ENCODE measurements at regions of chr10 and their contacts with region 1.

Region 1: GRCh38 chr10:131981429-131982184 is at the start of gene BNIP3:
- DNase-seq: peak; percentile 94
- H3K4me3 Mint-ChIP-seq: peak within 1 kb of the TSS; percentile 83
- H3K27ac Mint-ChIP-seq: peak within 1 kb of the TSS; percentile 65
- H3K4me1 Mint-ChIP-seq: peaks cover 35% of the 10 kb centered on the region
- H3K27me3 Mint-ChIP-seq: no peaks in the 10 kb centered on the region
- total RNA-seq, gene BNIP3: 55.5 to 55.9 TPM

Region 2: DNA sequence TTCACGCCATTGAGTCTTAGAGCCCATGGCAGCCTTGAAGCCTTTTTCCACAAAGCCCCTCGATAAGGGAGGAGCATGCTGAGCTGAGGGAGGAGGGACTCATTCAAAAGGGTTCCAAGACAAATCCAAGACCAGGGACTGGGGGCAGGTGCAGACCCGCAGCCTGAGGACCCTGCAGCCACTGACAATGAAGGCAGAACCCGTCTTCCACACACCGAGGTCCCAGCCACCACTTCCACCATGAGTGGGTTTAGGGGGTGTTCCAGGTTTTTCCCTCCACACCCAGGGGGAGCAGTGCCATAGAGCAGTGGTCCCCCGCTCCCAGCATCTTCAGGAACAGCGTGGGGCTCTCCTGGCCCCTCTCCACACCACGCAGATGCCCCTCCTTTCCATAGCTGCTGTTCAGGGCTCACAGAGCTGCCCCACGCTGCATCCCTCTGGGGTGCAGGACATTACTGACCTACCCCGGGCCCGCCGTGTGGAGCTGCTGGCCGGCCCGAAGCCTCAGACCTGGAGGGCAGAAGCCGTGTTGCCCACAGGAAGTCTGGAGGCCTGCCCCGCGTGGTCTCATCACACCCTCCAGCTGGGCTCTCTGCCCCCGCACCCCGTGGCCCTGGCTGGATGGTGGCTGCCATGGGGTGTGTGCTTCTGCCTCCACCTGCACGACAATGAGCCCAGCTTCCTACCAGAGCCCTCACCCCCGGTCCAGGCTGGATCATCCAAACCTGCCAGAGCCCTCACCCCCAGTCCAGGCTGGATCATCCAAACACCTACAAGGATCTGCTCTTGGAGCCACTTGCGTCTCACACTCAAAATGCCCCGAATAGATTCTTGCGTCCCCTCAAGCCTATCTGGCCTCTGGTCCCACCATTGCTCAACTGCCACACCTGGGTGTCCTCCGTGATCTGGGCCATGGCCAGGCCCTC is 450.1 kb before region 1 on chr10:
- CTCF ChIA-PET with region 1: no interaction called
- intact Hi-C with region 1: no loop called
- DNase-seq: no peak
- H3K4me3 Mint-ChIP-seq: no peak overlapping the region
- H3K27ac Mint-ChIP-seq: no peak overlapping the region
- H3K4me1 Mint-ChIP-seq: no peaks in the 10 kb centered on the region
- H3K27me3 Mint-ChIP-seq: peaks cover 2% of the 10 kb centered on the region

Region 3: GRCh38 chr10:131900350-131901146 is 81.1 kb before region 1 on chr10 and contains the start of gene PPP2R2D:
- CTCF ChIA-PET with region 1: interaction called, 4 read pairs
- intact Hi-C with region 1: loop called (anchors 1 kb)
- DNase-seq: peak; percentile 94
- H3K4me3 Mint-ChIP-seq: peak within 1 kb of the TSS; percentile 87
- H3K27ac Mint-ChIP-seq: peak within 1 kb of the TSS; percentile 92
- H3K4me1 Mint-ChIP-seq: peaks cover 47% of the 10 kb centered on the region
- H3K27me3 Mint-ChIP-seq: peaks cover 4% of the 10 kb centered on the region
- total RNA-seq, gene PPP2R2D: 31.5 to 34.7 TPM

Region 4: GRCh38 chr10:131928248-131929095 is 53.1 kb before region 1 on chr10:
- CTCF ChIA-PET with region 1: no interaction called
- intact Hi-C with region 1: loop called (anchors 2 kb)
- DNase-seq: peak; percentile 75
- H3K4me3 Mint-ChIP-seq: peak overlapping the region; percentile 60
- H3K27ac Mint-ChIP-seq: peak overlapping the region; percentile 91
- H3K4me1 Mint-ChIP-seq: peaks cover 79% of the 10 kb centered on the region
- H3K27me3 Mint-ChIP-seq: no peaks in the 10 kb centered on the region

Region 5: DNA sequence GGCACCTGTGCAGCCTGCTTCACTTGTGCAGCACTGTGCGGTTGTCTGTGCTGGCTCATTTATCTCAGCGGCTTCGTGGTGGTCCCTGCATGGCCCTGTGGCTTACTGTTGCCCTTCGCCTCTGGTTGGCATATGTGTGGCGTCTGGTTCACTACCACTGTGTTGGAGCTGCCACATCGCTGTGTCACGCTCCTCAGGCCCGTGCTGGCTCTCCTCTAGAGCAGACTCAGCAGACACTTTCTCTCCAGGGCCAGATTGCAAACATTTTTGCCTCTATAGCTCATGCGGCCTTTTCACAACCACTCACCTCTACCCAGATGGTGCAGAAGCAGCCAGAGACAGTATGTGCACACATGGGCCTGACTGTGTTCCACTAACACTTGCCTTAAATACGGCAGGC is 42.9 kb before region 1 on chr10:
- CTCF ChIA-PET with region 1: no interaction called
- intact Hi-C with region 1: no loop called
- DNase-seq: no peak
- H3K4me3 Mint-ChIP-seq: no peak overlapping the region
- H3K27ac Mint-ChIP-seq: no peak overlapping the region
- H3K4me1 Mint-ChIP-seq: peaks cover 17% of the 10 kb centered on the region
- H3K27me3 Mint-ChIP-seq: no peaks in the 10 kb centered on the region